Heart left ventricle (tissue), 16 donors: ENCODE measurements at regions of chr6 and their contacts with region 1.

Region 1: DNA sequence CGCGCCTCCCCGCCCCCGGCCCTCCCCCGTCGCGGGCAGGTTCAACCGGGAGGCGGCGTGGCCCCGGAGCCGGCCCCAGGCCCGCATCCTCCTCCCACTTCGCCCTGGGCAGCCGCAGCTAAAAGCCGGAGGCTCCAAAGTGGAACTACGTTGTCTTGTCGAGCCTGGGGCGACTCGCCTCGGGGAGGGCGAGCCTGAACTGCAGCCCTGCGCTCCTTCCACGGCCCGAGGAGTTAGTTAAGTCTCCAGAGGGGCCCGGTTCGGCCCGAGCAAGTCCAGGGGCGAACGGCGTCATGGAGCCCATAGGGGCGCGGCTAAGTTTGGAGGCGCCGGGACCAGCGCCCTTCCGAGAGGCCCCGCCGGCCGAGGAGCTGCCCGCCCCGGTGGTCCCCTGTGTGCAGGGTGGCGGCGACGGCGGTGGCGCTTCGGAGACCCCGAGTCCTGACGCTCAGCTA is at the start of gene PPP1R3G:
- DNase-seq: peak; percentile 57 to 83 (median 60)
- ATAC-seq: peak; percentile 9 to 71 (median 62)
- H3K4me3 ChIP-seq: peak within 1 kb of the TSS; percentile 47 to 81 (median 70)
- H3K27ac ChIP-seq: peak within 1 kb of the TSS; percentile 59 to 94 (median 88)
- H3K4me1 ChIP-seq: peaks cover 0 to 30% (median 14%) of the 10 kb centered on the region in 12 donors
- H3K27me3 ChIP-seq: peaks cover 0 to 28% (median 0%) of the 10 kb centered on the region in 9 donors
- CTCF ChIP-seq: no peak
- POLR2A ChIP-seq: no peak
- total RNA-seq, gene PPP1R3G: 5.8 to 12.3 (median 9.7) TPM

Region 2: DNA sequence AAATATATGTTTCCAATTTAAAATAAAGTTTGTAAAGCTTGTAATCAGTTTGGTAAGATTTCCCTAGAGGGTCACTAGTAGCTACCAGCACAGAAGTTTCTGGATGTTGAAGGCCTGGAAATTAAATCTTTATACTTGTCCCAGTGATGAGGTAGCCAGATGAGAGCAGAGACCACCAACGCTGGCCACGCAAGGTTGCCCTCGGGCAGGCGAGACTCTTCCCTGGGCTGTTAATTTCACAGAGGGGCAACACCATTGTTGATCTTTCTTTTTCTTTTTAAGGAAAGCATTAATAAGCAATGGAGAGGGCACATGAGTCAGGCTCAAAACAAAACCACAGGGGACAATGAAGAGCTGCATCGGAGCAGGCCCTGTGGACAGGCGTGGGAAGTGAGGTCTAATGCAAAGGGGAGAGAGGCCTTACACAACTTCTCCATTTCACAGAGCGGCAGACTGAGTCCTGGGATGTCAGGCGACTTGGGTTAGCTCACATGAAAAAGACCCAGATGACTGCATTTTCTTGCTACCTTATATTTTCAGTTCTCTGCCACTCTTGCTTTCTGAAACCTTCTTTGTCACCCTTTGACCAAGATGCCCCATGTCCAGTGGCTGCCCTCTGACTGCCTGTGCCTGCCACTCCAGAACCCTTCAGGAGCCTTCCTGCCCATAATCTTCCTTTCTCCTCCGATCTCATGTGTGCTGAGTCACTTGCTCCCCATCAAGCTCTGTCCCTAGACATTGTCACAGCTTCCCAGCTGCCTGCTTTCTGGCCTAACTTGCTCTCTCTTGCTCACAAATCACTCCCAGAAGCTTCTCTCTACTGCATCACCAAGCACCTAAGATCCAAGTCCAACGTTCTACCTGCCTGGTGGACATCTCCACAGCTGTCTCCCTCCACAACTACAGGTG is 416.7 kb before region 1 on chr6:
- intact Hi-C with region 1: no loop called
- DNase-seq: no peak
- ATAC-seq: no peak
- H3K4me3 ChIP-seq: no peak overlapping the region
- H3K27ac ChIP-seq: no peak overlapping the region
- H3K4me1 ChIP-seq: peaks cover 0 to 14% (median 2%) of the 10 kb centered on the region in 12 donors
- H3K27me3 ChIP-seq: no peaks in the 10 kb centered on the region
- CTCF ChIP-seq: no peak
- POLR2A ChIP-seq: no peak

Region 3: GRCh38 chr6:5125152-5126006 is 40.2 kb after region 1 on chr6:
- intact Hi-C with region 1: loop called in 1 of 10 experiments (anchors 5 kb)
- DNase-seq: no peak
- ATAC-seq: no peak
- H3K4me3 ChIP-seq: no peak overlapping the region
- H3K27ac ChIP-seq: no peak overlapping the region
- H3K4me1 ChIP-seq: peaks cover 0 to 21% (median 0%) of the 10 kb centered on the region in 12 donors
- H3K27me3 ChIP-seq: no peaks in the 10 kb centered on the region
- CTCF ChIP-seq: no peak
- POLR2A ChIP-seq: no peak

Region 4: GRCh38 chr6:5205877-5206850 is 120.9 kb after region 1 on chr6:
- intact Hi-C with region 1: loop called in 1 of 10 experiments (anchors 10 kb)
- DNase-seq: peak; percentile 69 to 76 (median 72)
- ATAC-seq: peak; percentile 85 to 90 (median 90)
- H3K4me3 ChIP-seq: no peak overlapping the region
- H3K27ac ChIP-seq: peak overlapping the region; percentile 59 to 93 (median 82)
- H3K4me1 ChIP-seq: peaks cover 17 to 71% (median 50%) of the 10 kb centered on the region in 12 donors
- H3K27me3 ChIP-seq: no peaks in the 10 kb centered on the region
- CTCF ChIP-seq: no peak
- POLR2A ChIP-seq: no peak